B cell (primary cell): ENCODE measurements at regions of chr19 and their contacts with region 1.

Region 1: DNA sequence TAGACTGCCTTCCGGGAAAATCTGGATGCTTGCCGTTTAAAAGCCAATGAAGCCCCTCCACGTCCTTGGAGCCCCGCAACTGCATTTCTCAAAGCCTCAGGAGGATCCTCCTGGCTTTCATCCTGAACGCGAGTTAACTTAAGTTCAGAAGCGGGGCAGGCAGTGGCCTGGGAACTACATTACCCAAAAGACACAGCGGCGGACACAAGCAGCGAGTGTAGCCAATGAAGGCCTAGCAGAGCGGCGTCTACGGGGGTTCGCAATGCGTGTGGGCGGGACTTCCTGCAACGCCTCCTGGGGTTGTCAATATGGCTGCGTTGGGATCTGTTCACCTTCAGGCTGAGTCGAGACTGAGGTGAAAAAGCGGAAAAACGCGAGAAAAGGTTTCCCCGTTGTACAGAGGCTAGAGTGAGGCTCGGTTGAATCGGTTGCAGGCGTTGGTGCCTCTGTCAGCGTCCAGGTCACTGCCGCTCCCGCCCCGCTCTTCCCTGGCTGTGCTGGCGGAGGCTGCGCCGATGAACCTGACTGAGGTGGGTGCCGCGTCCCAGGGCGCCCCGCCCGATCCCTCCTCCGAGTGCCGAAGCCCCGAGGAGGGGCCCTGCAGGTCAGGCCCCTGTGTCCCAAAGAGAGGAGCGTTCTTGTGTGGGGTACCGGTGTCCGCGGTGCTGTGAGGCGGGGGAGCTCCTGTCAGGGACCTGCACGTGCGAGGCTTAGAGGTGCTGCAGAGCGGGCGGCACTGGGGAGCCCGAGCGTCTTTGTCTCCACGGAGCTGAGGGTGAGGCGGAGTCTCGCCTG is at the start of gene ZNF17:
- DNase-seq: peak; percentile 93
- ATAC-seq: peak; percentile 100
- H3K4me3 ChIP-seq: peak within 1 kb of the TSS; percentile 66 to 98 (median 89)
- H3K4me3 Mint-ChIP-seq: peak within 1 kb of the TSS; percentile 97
- H3K27ac ChIP-seq: peak within 1 kb of the TSS; percentile 22 to 77
- H3K27ac Mint-ChIP-seq: peak within 1 kb of the TSS; percentile 89
- H3K4me1 ChIP-seq: peaks cover 12 to 17% of the 10 kb centered on the region in 2 donors
- H3K4me1 Mint-ChIP-seq: peaks cover 26% of the 10 kb centered on the region
- H3K27me3 ChIP-seq: no peaks in the 10 kb centered on the region
- H3K27me3 Mint-ChIP-seq: no peaks in the 10 kb centered on the region
- CTCF ChIP-seq: no peak
- total RNA-seq, gene ZNF17: 25.8 and 30.7 TPM in 2 replicates

Region 2: DNA sequence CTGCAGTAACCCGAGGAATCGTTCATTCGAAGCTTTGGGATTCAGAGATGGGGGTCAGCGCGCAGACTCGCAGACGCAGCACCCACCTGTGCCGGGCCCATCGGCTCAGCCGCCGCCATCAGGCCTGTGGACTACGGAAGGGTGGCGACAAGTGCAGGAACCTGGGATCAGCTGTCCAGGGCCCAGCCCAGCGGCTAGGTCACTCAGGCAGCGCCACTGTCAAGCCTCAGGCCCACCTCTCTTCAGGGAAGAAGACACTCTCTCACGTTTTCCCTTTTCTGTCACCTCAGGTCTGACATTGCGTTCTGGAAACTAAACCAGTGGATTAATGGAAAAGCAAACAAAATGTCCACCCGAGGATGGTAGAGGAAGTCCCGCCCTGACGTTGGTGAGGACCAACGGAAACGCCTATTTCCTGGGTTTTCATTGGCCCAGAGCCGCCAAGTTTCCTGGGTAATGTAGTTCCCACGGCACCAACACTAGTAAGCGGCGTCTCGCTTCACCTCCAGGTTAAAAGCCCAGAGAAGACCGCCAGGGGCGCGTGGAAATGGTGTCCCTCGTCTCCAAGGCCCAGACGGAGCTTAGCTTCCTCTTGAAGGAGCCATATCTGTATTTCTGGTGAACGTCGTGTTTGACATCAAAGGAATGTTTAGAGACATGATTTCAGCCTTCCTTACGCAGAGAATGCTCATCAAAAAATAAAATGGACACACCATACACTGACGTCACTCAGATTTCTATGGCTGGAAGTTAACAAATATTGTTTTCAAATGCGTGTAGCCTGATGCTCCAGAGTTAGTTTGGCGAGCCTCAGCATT is 66.3 kb after region 1 on chr19 and contains the start of gene ZNF772:
- CTCF ChIA-PET with region 1: no interaction called
- POLR2A ChIA-PET with region 1: interaction called, 3 read pairs
- intact Hi-C with region 1: loop called (anchors 1 kb)
- DNase-seq: peak; percentile 95
- ATAC-seq: peak; percentile 99
- H3K4me3 ChIP-seq: peak within 1 kb of the TSS; percentile 77 to 91 (median 85)
- H3K4me3 Mint-ChIP-seq: peak within 1 kb of the TSS; percentile 86
- H3K27ac ChIP-seq: peak within 1 kb of the TSS; percentile 65 to 81
- H3K27ac Mint-ChIP-seq: peak within 1 kb of the TSS; percentile 81
- H3K4me1 ChIP-seq: peaks cover 11 to 15% of the 10 kb centered on the region in 2 donors
- H3K4me1 Mint-ChIP-seq: peaks cover 27% of the 10 kb centered on the region
- H3K27me3 ChIP-seq: no peaks in the 10 kb centered on the region
- H3K27me3 Mint-ChIP-seq: peaks cover 10% of the 10 kb centered on the region
- CTCF ChIP-seq: peak; percentile 68
- total RNA-seq, gene ZNF772: 26.2 and 27.4 TPM in 2 replicates

Region 3: DNA sequence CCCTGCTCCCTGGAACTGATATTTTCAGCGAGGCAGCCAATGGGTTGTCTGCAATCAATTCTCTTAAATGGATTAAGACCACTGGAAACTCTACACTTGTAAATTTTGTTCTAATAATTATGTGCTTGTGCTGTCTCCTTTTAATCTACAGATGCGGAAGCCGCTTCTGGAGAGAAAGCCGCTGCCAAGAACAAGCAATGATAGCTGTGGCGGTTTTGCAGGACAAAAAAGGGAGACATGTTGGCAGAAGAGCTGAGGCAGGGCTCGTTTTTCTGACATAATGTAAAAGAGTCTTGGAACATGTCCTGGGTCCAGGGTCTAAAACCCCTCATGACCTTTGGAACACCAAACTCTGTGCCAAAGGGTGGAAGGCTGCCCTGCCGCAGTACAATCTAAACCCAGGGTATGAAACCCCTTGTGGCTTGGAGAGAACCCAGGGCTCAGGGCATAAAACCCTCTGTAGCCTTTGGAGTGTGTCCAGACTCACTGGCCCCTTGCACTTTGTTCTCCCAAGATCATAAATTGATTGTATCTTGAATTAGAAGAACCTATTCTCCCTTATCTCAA is 492.6 kb after region 1 on chr19:
- CTCF ChIA-PET with region 1: interaction called, 6 read pairs
- POLR2A ChIA-PET with region 1: interaction called, 4 read pairs
- intact Hi-C with region 1: loop called (anchors 1 kb)
- DNase-seq: no peak
- ATAC-seq: no peak
- H3K4me3 ChIP-seq: no peak overlapping the region
- H3K4me3 Mint-ChIP-seq: no peak overlapping the region
- H3K27ac ChIP-seq: no peak overlapping the region
- H3K27ac Mint-ChIP-seq: no peak overlapping the region
- H3K4me1 ChIP-seq: peaks cover 0 to 8% of the 10 kb centered on the region in 2 donors
- H3K4me1 Mint-ChIP-seq: peaks cover 15% of the 10 kb centered on the region
- H3K27me3 ChIP-seq: no peaks in the 10 kb centered on the region
- H3K27me3 Mint-ChIP-seq: no peaks in the 10 kb centered on the region
- CTCF ChIP-seq: peak; percentile 5